Aorta (tissue), 5 donors: ENCODE measurements at regions of chr6 and their contacts with region 1.

Region 1: DNA sequence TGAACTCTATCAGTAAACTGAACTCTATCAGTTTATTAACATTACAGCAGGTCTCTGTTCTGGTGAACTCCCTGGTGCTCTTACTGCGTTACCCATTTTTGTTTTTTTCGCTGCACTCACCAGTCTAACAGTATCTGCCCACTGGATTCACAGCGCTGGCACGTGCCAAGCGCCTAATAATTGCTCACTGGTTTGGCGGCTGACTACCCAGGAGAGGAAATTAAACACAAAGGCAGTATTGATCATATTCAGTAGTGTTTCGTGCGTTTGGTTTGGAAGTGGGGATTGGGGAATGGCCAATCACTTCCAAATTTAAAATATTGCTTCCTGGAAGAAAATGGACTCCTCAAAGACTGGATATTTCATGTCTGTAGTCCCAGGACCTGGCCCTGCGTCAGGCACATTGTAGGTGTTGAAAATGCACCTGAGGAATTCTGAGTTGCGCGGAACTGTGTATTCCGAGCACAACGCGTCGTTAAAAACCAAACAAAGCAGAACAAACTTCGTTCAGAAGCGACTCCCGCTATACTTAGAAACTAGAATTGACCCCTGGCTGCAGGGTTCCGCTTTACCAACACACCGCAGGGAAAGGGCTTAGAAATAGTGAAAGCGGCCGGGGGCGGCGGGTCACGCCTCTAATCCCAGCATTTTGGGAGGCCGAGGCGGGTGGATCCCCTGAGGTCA is 1.1 kb upstream of the RPS12 start:
- DNase-seq: peak in 1 of 2 donors; percentile 61
- ATAC-seq: peak; percentile 19
- H3K4me3 ChIP-seq: peak overlapping the region; percentile 28 to 69
- H3K27ac ChIP-seq: peak overlapping the region in 1 of 2 donors; percentile 67
- H3K4me1 ChIP-seq: peaks cover 1 to 6% of the 10 kb centered on the region in 2 donors
- H3K27me3 ChIP-seq: peaks cover 0 to 1% of the 10 kb centered on the region in 2 donors

Region 2: GRCh38 chr6:132025468-132025867 is 787.8 kb before region 1 on chr6:
- intact Hi-C with region 1: no loop called
- DNase-seq: no peak
- ATAC-seq: no peak
- H3K4me3 ChIP-seq: no peak overlapping the region
- H3K27ac ChIP-seq: no peak overlapping the region
- H3K4me1 ChIP-seq: no peaks in the 10 kb centered on the region
- H3K27me3 ChIP-seq: no peaks in the 10 kb centered on the region

Region 3: GRCh38 chr6:132512638-132513632 is 300.4 kb before region 1 on chr6 and contains the start of gene STX7:
- intact Hi-C with region 1: loop called in 1 of 2 experiments (anchors 10 kb)
- DNase-seq: peak; percentile 95 to 96
- ATAC-seq: peak; percentile 97
- H3K4me3 ChIP-seq: peak within 1 kb of the TSS; percentile 88 to 99
- H3K27ac ChIP-seq: peak within 1 kb of the TSS; percentile 76 to 93
- H3K4me1 ChIP-seq: peaks cover 0 to 19% of the 10 kb centered on the region in 2 donors
- H3K27me3 ChIP-seq: no peaks in the 10 kb centered on the region
- total RNA-seq, gene STX7: 51.5 to 80.7 TPM

Region 4: DNA sequence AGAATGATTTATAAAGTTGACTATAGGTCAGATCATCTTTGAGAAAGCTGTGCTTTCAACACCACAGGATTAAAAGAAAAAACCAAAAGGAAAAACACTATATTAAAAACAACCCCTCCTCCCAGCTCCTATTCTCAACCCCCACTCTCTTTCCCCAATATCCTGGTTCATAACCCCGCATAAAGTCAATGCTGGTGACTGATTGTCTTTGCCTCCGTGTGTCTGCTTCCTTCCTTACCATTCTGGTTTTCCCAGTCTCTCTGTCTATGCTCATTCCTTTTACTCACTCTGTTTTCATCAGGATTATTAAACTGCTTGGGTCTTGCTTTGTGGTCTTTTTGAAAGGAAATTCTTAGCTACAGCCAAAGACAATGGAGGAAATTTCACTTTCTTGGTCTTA is 37.0 kb after region 1 on chr6:
- intact Hi-C with region 1: no loop called
- DNase-seq: no peak
- ATAC-seq: no peak
- H3K4me3 ChIP-seq: no peak overlapping the region
- H3K27ac ChIP-seq: no peak overlapping the region
- H3K4me1 ChIP-seq: no peaks in the 10 kb centered on the region
- H3K27me3 ChIP-seq: no peaks in the 10 kb centered on the region

Region 5: DNA sequence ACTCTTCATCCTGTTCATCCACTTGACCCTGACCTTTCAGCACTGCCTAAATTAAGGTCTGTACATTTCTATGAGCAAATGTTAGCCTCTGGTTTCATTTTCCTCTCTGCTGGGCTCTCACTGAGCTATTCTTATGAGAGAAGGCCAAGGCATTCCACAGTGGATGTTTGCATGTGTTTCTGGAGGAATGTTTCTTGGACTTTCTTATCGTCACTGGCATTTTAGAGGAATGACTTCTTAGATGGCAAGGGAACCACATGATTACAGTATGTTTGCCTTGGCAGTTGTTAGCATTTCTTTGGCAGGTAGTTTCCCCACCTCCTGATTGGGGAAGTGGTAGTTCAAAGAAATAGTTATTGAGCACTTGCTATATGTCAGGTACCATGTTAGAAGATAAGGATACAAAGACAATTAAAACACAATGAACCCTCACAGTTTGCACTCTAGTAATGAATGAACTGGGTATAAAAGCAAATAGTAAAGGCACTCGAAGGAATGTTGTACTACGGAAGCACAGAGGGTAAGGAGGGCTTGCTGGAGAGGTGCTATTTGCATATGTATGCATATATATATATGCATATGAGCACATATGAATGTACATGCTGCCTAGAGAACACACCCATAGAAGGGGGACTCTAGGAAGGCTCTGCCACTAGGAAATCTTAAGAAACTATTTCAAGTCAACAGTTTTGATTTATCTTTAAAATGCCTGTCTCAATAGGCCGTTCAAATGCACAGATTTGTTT is 735.3 kb after region 1 on chr6:
- intact Hi-C with region 1: loop called in 1 of 2 experiments (anchors 2 kb)
- DNase-seq: no peak
- ATAC-seq: peak; percentile 42
- H3K4me3 ChIP-seq: no peak overlapping the region
- H3K27ac ChIP-seq: peak overlapping the region in 1 of 2 donors; percentile 63
- H3K4me1 ChIP-seq: peaks cover 2 to 5% of the 10 kb centered on the region in 2 donors
- H3K27me3 ChIP-seq: no peaks in the 10 kb centered on the region